Right ventricle myocardium superior (tissue), 1 donor: ENCODE measurements at regions of chr9 and their contacts with region 1.

Region 1: GRCh38 chr9:130343445-130343918 is 77.9 kb downstream of the HMCN2 start:
- DNase-seq: no peak
- ATAC-seq: peak; percentile 53

Region 2: GRCh38 chr9:129932303-129933151 is 411.0 kb before region 1 on chr9:
- intact Hi-C with region 1: no loop called
- DNase-seq: no peak
- ATAC-seq: peak; percentile 59

Region 3: GRCh38 chr9:130138171-130138653 is 205.3 kb before region 1 on chr9:
- intact Hi-C with region 1: loop called (anchors 10 kb)
- DNase-seq: peak; percentile 50
- ATAC-seq: peak; percentile 52

Region 4: GRCh38 chr9:130265431-130266235 is 77.8 kb before region 1 on chr9 and contains the start of gene HMCN2:
- intact Hi-C with region 1: loop called (anchors 10 kb)
- DNase-seq: peak; percentile 63
- ATAC-seq: peak; percentile 60
- total RNA-seq, gene HMCN2: 5.2 TPM

Region 5: GRCh38 chr9:130535818-130536561 is 192.5 kb after region 1 on chr9:
- intact Hi-C with region 1: no loop called
- DNase-seq: no peak
- ATAC-seq: peak; percentile 73